ENCODE measurements at regions of chr3 and their contacts with region 1.

Region 1: DNA sequence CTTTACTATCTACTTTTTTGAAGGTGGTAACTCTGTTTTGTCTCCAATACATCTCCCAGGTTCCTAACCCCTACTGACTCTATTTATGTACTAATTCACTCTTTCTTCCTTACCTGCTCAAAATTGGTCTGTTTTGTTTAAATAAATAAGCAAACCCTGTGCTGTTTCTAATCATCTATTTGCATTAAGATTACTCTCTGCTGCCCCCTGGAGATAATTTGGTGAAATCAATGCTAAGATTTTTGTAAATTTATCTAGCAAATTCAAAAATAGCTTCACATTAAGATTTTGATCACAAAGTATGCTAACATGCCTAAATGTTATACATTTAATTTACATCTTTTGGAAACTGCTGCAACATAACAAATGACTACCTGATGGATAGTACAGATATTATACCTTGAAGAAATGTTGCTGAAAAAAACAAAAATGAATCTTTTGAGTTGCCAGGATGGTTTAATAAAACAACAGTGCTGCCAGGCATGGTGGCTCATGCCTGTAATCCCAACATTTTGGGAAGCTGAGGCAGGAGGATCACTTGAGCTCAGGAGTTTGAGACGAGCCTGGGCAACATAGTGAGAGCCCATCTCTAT is 4.4 kb upstream of the CD200R1 start:
- DNase-seq: no peak
- H3K4me3 ChIP-seq: no peak overlapping the region
- H3K27ac ChIP-seq: no peak overlapping the region
- H3K4me1 ChIP-seq: peaks cover 21 to 73% (median 51%) of the 10 kb centered on the region in 6 donors
- H3K27me3 ChIP-seq: no peaks in the 10 kb centered on the region
- CTCF ChIP-seq: peak in 10 of 11 experiments; percentile 40 to 83 (median 72)
- POLR2A ChIP-seq: no peak

Region 2: GRCh38 chr3:112642912-112643506 is 336.3 kb before region 1 on chr3:
- intact Hi-C with region 1: loop called (anchors 5 kb)
- DNase-seq: peak; percentile 90
- H3K4me3 ChIP-seq: peak overlapping the region in 2 of 8 donors; percentile 9 to 47
- H3K27ac ChIP-seq: peak overlapping the region in 1 of 8 donors; percentile 48
- H3K4me1 ChIP-seq: peaks cover 0 to 27% (median 15%) of the 10 kb centered on the region in 6 donors
- H3K27me3 ChIP-seq: peaks cover 0 to 22% (median 0%) of the 10 kb centered on the region in 7 donors
- CTCF ChIP-seq: peak; percentile 63 to 87 (median 80)
- POLR2A ChIP-seq: no peak

Region 3: GRCh38 chr3:112734718-112735350 is 244.5 kb before region 1 on chr3:
- intact Hi-C with region 1: loop called (anchors 5 kb)
- DNase-seq: peak; percentile 71
- H3K4me3 ChIP-seq: no peak overlapping the region
- H3K27ac ChIP-seq: no peak overlapping the region
- H3K4me1 ChIP-seq: peaks cover 0 to 44% (median 16%) of the 10 kb centered on the region in 6 donors
- H3K27me3 ChIP-seq: no peaks in the 10 kb centered on the region
- CTCF ChIP-seq: peak; percentile 46 to 82 (median 72)
- POLR2A ChIP-seq: no peak